ENCODE measurements at regions of chr3 and their contacts with region 1.

Region 1: DNA sequence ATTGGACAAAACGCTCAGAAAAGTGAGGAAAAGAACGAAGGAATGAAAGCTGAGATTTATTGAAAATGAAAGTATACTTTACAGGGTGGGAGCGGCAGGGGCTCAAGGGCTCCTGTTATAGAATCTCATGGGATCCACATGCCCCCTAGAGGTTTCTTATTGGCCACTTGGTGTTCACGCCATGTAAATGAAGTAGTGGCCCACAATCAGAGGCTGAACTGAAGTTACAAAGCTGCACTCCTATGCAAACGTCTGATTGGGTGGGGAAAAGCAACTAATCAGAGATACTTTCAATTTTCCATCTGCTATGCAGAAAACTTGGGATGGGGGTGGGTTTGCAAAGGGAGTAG is 216.7 kb downstream of the PTPRG start:
- DNase-seq: no peak
- ATAC-seq: no peak
- H3K4me3 ChIP-seq: no peak overlapping the region
- H3K27ac ChIP-seq: no peak overlapping the region
- H3K4me1 ChIP-seq: peaks cover 1% of the 10 kb centered on the region; the same call in 1 of the 2 replicates
- H3K27me3 ChIP-seq: no peaks in the 10 kb centered on the region
- CTCF ChIP-seq: no peak
- POLR2A ChIP-seq: no peak
- RAD21 ChIP-seq: no peak

Region 2: DNA sequence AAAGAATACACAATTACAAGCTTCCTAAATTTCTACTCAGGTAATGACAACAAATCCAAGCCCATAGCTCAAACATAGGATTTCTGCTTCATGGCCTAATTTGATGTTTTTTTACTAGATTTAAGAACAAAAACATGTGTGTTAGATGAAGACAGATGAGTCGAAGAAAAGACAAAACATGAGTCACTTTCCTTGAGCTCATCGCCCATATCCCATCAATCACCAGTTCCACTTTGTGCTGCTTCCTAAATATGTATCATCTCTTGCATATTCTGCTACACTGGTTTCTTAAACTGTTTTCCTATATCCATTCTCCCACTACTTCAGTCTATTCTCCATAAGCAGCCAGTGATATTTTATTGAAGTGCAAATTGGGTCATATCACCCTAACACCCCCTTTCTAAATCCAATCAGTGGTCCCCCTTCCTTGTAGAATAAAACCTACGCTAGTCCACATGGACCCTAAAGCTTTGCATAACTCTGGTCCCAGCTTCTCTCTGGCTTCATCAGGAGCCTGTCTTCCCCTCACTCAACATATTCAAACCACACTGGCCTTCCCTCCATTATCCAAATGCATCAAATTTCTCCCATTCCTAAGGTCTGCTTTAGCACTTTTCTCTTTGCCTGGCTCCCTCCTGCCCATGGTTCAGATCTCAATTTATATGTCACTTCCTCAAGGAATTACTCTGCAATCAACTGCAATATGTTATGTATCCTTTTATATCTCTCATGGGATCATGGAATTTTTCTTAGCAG is 1560.8 kb before region 1 on chr3:
- CTCF ChIA-PET with region 1: no interaction called
- POLR2A ChIA-PET with region 1: no interaction called
- dilution Hi-C with region 1: no loop called
- in situ Hi-C with region 1: no loop called
- intact Hi-C with region 1: loop called (anchors 5 kb)
- DNase-seq: peak; percentile 2
- ATAC-seq: no peak
- H3K4me3 ChIP-seq: no peak overlapping the region
- H3K27ac ChIP-seq: no peak overlapping the region
- H3K4me1 ChIP-seq: no peaks in the 10 kb centered on the region
- H3K27me3 ChIP-seq: no peaks in the 10 kb centered on the region
- CTCF ChIP-seq: no peak
- POLR2A ChIP-seq: no peak
- RAD21 ChIP-seq: no peak

Region 3: DNA sequence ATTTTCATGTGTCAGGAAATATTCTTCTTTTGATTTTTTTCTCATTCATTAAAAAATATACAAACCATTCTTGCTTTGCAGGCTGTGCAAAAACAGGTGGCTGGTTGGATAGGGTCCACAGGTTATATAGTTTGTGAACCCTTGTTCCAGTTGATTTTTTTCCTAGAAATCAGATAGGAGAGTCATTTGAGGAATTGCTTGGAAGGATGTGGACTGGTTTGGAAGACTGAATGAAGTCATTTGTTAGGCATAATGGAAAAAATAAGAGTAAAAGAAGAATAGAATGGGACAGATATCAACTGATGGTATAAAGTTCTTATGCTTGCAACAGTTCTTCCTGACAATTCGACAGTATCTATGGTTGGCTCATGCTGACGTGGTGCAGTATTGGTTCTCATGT is 27.4 kb before region 1 on chr3:
- CTCF ChIA-PET with region 1: interaction called, 3 read pairs
- POLR2A ChIA-PET with region 1: interaction called, 14 read pairs
- dilution Hi-C with region 1: no loop called
- in situ Hi-C with region 1: no loop called
- intact Hi-C with region 1: no loop called
- DNase-seq: peak; percentile 16
- ATAC-seq: no peak
- H3K4me3 ChIP-seq: no peak overlapping the region
- H3K27ac ChIP-seq: no peak overlapping the region
- H3K4me1 ChIP-seq: no peaks in the 10 kb centered on the region
- H3K27me3 ChIP-seq: no peaks in the 10 kb centered on the region
- CTCF ChIP-seq: no peak
- POLR2A ChIP-seq: no peak
- RAD21 ChIP-seq: no peak

Region 4: DNA sequence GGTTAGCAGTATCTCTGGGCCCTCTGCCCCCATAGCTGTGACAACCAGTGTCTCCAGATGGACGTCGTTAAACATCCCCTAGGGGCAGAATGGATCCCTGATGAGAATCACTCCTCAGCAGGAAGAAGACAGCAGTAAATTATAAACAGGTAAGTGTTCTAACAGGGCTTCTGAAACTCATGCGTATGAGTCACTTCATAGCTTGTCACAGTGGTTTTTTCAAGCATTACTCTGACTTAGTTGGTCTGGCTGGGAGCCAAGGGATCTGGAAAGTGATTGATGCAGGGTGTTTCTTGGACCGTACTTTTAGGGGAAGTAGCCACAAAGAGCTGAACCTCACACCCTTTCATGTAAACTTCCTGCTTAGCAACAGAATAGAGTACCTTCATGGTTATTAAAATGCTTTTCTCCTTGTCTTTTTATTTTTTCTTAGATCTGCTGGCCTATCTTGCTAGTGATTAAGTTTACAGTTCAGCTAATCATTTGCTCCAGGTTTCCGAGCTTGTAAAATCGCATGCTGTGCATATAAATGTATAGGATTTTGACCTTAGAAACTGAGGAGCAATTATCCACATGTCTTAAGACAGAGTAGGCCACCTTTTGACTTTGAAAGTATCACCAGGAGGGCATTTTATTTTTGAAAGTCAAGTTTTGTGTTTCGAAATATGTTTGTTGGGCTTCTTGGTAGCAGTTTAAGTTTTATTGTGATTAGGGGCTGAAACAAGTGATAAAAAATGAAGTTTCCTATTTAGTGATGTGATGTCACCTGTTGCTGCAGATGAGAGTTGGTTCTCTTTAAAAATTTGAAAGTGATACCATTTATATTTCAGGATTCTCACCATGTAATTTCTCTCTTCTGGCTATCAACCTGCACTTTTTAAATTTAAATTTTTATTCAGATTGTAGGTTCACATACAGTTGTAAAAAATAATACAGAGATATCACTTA is 117.1 kb after region 1 on chr3:
- CTCF ChIA-PET with region 1: no interaction called
- POLR2A ChIA-PET with region 1: no interaction called
- dilution Hi-C with region 1: no loop called
- in situ Hi-C with region 1: no loop called
- intact Hi-C with region 1: no loop called
- DNase-seq: peak; percentile 90
- ATAC-seq: peak; percentile 72
- H3K4me3 ChIP-seq: no peak overlapping the region
- H3K27ac ChIP-seq: no peak overlapping the region
- H3K4me1 ChIP-seq: peaks cover 2% of the 10 kb centered on the region; the same call in 1 of the 2 replicates
- H3K27me3 ChIP-seq: no peaks in the 10 kb centered on the region
- CTCF ChIP-seq: no peak
- POLR2A ChIP-seq: no peak
- RAD21 ChIP-seq: no peak

Region 5: GRCh38 chr3:63442918-63443317 is 1664.8 kb after region 1 on chr3:
- CTCF ChIA-PET with region 1: no interaction called
- POLR2A ChIA-PET with region 1: no interaction called
- dilution Hi-C with region 1: no loop called
- in situ Hi-C with region 1: no loop called
- intact Hi-C with region 1: no loop called
- DNase-seq: no peak
- ATAC-seq: no peak
- H3K4me3 ChIP-seq: no peak overlapping the region
- H3K27ac ChIP-seq: no peak overlapping the region
- H3K4me1 ChIP-seq: no peaks in the 10 kb centered on the region
- H3K27me3 ChIP-seq: no peaks in the 10 kb centered on the region
- CTCF ChIP-seq: no peak
- POLR2A ChIP-seq: no peak
- RAD21 ChIP-seq: no peak

Measured in IMR-90 (cell line).